ENCODE measurements at regions of chr20 and their contacts with region 1.

Region 1: DNA sequence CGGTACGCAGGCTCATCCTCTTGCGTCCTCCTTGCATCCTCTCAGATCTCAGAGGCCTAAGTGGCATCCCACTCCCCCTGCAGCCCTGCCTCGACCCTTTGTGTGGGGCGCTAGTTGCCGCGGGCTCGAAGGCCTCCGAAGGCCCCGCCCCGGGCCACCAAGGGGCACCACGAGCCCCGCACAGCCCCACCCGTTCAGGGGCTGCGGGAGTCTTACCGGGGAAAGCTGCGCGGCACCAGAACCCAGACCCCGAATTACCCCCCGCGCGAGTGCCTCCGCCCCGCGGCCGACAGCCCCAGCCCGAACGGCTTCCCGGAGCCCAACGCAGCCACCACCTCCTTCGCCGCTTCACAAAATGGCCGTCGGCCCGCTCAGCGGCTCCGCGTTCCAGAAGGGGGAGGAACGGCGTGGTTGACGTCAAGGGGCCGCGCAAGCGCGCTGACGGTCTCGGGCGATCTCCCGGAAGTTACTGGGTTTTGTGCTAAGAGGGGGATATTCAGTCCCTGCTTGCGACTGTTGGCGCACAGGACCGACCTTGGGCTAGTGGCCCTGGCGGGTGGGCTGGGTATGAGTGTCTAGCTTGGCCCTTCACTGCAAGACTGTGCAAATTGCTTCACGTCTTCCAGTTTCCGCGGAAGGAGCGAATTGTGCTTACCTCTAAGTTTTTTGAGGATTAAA is at the starts of genes CPNE1 and RBM12:
- DNase-seq: peak; percentile 94 to 95 (median 95)
- H3K4me3 ChIP-seq: peak within 1 kb of the TSS; percentile 98 to 99
- H3K4me3 Mint-ChIP-seq: peak within 1 kb of the TSS; percentile 88 to 98 (median 97)
- H3K27ac ChIP-seq: peak within 1 kb of the TSS; percentile 99
- H3K27ac Mint-ChIP-seq: peak within 1 kb of the TSS; percentile 95 to 100 (median 99)
- H3K4me1 ChIP-seq: peaks cover 49% of the 10 kb centered on the region
- H3K4me1 Mint-ChIP-seq: peaks cover 0 to 51% (median 36%) of the 10 kb centered on the region in 4 donors
- H3K27me3 ChIP-seq: no peaks in the 10 kb centered on the region
- H3K27me3 Mint-ChIP-seq: no peaks in the 10 kb centered on the region
- total RNA-seq, gene CPNE1: 316 to 353 TPM
- total RNA-seq, gene RBM12: 129 to 138 TPM

Region 2: GRCh38 chr20:35490736-35491181 is 173.9 kb before region 1 on chr20:
- CTCF ChIA-PET with region 1: no interaction called
- POLR2A ChIA-PET with region 1: interaction called, 25 read pairs
- intact Hi-C with region 1: no loop called
- DNase-seq: peak; percentile 70 to 84 (median 74)
- H3K4me3 ChIP-seq: peak overlapping the region; percentile 48 to 97
- H3K4me3 Mint-ChIP-seq: peak overlapping the region; percentile 95 to 99 (median 99)
- H3K27ac ChIP-seq: peak overlapping the region; percentile 87
- H3K27ac Mint-ChIP-seq: peak overlapping the region; percentile 94 to 100 (median 98)
- H3K4me1 ChIP-seq: peaks cover 55% of the 10 kb centered on the region
- H3K4me1 Mint-ChIP-seq: peaks cover 38 to 81% (median 56%) of the 10 kb centered on the region in 4 donors
- H3K27me3 ChIP-seq: no peaks in the 10 kb centered on the region
- H3K27me3 Mint-ChIP-seq: no peaks in the 10 kb centered on the region

Region 3: DNA sequence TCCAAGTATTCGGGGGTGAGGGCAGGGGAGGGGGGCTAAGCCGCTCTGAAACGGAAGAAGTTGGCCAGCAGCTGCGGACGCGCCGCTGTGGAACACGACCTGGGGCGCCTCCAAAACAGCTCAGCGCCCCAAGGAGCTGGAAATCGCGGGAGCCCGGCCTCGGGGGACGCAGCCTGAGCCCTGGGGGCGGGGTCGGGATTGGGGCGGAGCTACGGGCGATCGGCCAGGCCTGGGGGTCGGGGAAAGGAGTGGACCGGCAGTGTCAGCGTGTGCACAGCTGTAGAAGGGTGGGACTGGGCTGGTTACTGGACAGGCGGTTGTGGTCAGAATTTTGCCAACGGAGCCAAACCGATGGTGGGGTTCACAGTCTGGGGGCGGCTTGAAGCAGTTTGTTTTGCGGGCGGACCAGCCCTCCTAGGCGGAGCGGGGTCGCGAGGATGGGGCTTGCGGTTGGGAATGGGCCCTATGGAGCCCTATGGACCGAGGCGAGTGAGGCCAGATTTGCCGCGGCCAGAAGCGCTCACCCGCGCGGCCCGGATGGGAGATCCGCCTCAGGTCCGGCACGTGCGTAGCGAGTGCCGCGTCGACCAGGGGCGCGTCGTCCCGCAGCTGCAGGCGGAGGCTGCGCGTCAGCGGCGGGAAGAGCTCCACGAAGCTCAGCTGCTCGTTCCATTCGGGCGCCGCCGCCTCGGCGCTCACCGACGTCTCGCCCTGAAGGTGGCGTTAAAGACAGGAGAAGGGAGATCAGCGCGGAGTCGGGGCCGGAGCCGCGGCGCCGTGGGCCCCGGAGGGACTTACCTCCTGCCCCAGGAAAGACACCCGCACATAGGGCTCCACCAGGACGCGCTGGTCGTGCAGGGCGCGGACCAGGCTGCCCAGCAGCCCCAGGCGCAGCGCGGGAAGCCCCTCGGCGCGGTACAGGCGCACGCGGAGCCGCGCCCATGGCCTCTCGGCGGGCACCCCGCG is 63.4 kb before region 1 on chr20:
- CTCF ChIA-PET with region 1: interaction called, 10 read pairs
- POLR2A ChIA-PET with region 1: interaction called, 16 read pairs
- intact Hi-C with region 1: loop called (anchors 5 kb)
- DNase-seq: peak; percentile 78 to 83 (median 79)
- H3K4me3 ChIP-seq: peak overlapping the region; percentile 29 to 50
- H3K4me3 Mint-ChIP-seq: peak overlapping the region; percentile 77 to 85 (median 80)
- H3K27ac ChIP-seq: no peak overlapping the region
- H3K27ac Mint-ChIP-seq: peak overlapping the region in 6 of 7 donors; percentile 22 to 81 (median 52)
- H3K4me1 ChIP-seq: peaks cover 17% of the 10 kb centered on the region
- H3K4me1 Mint-ChIP-seq: peaks cover 2 to 15% (median 4%) of the 10 kb centered on the region in 4 donors
- H3K27me3 ChIP-seq: no peaks in the 10 kb centered on the region
- H3K27me3 Mint-ChIP-seq: peaks cover 2 to 6% of the 10 kb centered on the region in 2 donors

Region 4: GRCh38 chr20:35652641-35653429 is 11.8 kb before region 1 on chr20:
- CTCF ChIA-PET with region 1: no interaction called
- POLR2A ChIA-PET with region 1: interaction called, 26 read pairs
- intact Hi-C with region 1: no loop called
- DNase-seq: no peak
- H3K4me3 ChIP-seq: no peak overlapping the region
- H3K4me3 Mint-ChIP-seq: no peak overlapping the region
- H3K27ac ChIP-seq: no peak overlapping the region
- H3K27ac Mint-ChIP-seq: no peak overlapping the region
- H3K4me1 ChIP-seq: peaks cover 56% of the 10 kb centered on the region
- H3K4me1 Mint-ChIP-seq: peaks cover 33 to 61% (median 41%) of the 10 kb centered on the region in 4 donors
- H3K27me3 ChIP-seq: no peaks in the 10 kb centered on the region
- H3K27me3 Mint-ChIP-seq: no peaks in the 10 kb centered on the region

Region 5: DNA sequence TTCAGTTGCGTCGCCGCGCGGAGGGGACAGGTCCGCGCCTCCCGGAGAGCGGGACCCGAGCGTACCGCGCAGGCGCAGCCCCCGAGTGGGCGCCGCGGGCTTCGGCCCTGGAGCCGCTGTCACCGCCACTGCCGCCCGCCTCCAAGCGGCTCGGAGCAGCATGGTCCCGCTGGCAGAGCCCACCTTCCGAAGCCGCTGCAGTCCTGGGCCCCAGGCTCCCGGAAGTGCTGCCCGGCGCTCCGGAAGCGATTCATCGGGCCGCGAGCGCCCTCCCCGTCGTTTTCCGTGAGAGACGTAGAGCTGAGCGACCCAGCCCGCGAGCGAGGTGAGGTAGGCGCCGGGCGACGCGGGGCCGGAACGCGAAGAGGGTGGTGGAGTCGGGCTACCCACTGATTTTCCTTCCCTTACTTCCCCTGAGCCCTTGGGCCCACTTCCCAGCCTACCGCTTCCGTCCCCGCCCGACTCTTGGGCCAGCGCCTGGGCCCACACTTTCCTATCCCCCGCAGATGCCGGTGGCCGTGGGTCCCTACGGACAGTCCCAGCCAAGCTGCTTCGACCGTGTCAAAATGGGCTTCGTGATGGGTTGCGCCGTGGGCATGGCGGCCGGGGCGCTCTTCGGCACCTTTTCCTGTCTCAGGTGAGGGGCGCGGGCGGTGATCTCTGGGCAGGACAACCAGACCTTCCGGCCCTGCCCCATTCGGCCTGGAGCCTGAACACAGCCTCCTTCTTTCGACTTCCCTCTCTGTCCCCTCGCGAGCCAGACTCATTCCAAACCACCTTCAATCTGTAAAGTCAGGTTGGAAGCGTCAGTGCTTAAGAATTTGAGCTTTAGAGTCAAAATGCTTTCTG is 34.7 kb after region 1 on chr20 and contains the starts of genes NFS1 and ROMO1:
- CTCF ChIA-PET with region 1: no interaction called
- POLR2A ChIA-PET with region 1: interaction called, 18 read pairs
- intact Hi-C with region 1: loop called (anchors 1 kb)
- DNase-seq: peak; percentile 82 to 88 (median 83)
- H3K4me3 ChIP-seq: peak within 1 kb of the TSS; percentile 90 to 92
- H3K4me3 Mint-ChIP-seq: peak within 1 kb of the TSS; percentile 92 to 99 (median 95)
- H3K27ac ChIP-seq: peak within 1 kb of the TSS; percentile 84
- H3K27ac Mint-ChIP-seq: peak within 1 kb of the TSS; percentile 93 to 99 (median 97)
- H3K4me1 ChIP-seq: peaks cover 38% of the 10 kb centered on the region
- H3K4me1 Mint-ChIP-seq: peaks cover 33 to 67% (median 42%) of the 10 kb centered on the region in 4 donors
- H3K27me3 ChIP-seq: no peaks in the 10 kb centered on the region
- H3K27me3 Mint-ChIP-seq: no peaks in the 10 kb centered on the region
- total RNA-seq, gene NFS1: 30.3 to 33.6 TPM
- total RNA-seq, gene ROMO1: 38.4 to 43.8 TPM

Region 6: DNA sequence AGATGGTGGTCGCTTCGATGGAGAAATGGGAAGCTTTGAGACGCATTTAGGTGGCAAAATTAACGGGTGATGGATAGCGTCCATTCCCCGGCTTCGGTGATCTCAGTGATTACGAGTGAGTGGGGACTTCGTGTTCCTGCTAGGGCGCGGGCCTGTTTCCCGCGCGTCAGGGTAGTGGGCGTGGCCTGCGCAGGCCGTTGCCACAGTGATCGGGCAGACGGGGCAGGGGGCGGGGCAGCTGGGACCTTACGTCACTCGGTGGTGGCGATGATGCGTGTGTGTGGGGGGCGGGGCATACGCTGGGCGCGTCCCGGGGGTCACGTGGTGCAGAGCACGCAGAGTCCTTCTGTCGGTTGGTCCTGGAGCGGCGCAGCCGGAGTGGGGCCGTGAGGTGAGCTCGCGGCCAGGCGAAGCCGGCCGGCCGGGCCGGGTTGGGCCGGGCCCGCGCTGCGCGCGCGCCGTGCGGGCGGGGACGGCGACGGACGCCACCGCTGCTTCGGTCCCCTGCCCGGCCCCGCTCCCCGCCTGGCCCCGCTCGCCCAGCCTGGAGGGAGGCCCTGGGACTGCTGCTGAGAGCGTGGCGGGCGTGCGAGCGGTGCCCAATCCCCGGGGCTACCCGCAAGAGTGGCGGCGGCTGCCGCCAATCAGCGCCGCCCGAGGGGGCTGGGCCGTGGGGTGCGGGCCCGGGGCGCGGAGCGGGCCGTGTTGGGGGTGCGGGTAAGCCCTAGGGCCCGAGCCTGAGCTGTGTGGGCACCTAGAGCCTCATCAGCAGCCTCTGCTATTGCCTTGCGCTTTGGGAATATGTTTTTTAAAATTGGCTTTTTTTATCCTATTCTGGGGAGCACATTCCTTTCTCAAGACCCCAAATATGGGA is 107.2 kb after region 1 on chr20 and contains the start of gene PHF20:
- CTCF ChIA-PET with region 1: no interaction called
- POLR2A ChIA-PET with region 1: interaction called, 18 read pairs
- intact Hi-C with region 1: no loop called
- DNase-seq: peak; percentile 99 to 100 (median 99)
- H3K4me3 ChIP-seq: peak within 1 kb of the TSS; percentile 49 to 79
- H3K4me3 Mint-ChIP-seq: peak within 1 kb of the TSS; percentile 87 to 93 (median 91)
- H3K27ac ChIP-seq: peak within 1 kb of the TSS; percentile 94
- H3K27ac Mint-ChIP-seq: peak within 1 kb of the TSS; percentile 96 to 100 (median 100)
- H3K4me1 ChIP-seq: peaks cover 89% of the 10 kb centered on the region
- H3K4me1 Mint-ChIP-seq: peaks cover 57 to 93% (median 72%) of the 10 kb centered on the region in 4 donors
- H3K27me3 ChIP-seq: no peaks in the 10 kb centered on the region
- H3K27me3 Mint-ChIP-seq: no peaks in the 10 kb centered on the region
- total RNA-seq, gene PHF20: 72.9 to 82.3 TPM

Measured in CD4-positive, alpha-beta memory T cell (primary cell).